ENCODE measurements at regions of chr7 and their contacts with region 1.

Region 1: DNA sequence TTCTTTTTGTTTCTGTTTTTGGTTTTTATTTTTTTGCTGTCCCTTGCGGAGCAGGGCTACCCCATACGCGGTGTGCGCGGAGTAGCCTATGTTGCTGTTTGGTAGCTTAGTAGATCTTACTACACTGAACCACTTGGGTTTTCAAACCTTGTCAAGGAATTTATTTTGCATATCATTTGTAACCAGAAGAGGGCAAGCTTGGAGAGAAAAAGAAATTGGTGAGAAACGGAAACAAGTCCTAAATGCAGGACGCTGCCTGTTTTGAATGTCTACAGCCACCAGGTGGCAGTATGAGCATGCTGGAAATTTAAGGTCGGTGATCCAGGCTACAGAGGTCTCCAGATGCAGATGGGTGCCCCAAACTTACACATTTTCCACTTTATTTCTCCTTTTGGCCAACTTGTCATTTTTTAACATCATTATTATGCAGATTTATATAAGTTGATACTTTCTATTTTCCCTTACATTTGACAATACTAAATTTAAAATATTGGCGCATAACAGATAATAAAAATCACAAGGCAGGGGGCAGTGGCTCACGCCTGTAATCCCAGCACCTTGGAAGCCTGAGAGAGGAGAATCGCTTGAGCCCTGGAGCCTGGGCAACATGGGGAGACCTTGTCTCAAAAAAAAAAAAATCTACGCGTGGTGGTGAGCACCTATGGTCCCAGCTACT is 15.3 kb upstream of the TRA2A start:
- DNase-seq: peak; percentile 85 to 89
- H3K4me3 ChIP-seq: no peak overlapping the region
- H3K27ac ChIP-seq: no peak overlapping the region
- H3K4me1 ChIP-seq: no peaks in the 10 kb centered on the region
- H3K27me3 ChIP-seq: no peaks in the 10 kb centered on the region
- CTCF ChIP-seq: peak; percentile 98

Region 2: DNA sequence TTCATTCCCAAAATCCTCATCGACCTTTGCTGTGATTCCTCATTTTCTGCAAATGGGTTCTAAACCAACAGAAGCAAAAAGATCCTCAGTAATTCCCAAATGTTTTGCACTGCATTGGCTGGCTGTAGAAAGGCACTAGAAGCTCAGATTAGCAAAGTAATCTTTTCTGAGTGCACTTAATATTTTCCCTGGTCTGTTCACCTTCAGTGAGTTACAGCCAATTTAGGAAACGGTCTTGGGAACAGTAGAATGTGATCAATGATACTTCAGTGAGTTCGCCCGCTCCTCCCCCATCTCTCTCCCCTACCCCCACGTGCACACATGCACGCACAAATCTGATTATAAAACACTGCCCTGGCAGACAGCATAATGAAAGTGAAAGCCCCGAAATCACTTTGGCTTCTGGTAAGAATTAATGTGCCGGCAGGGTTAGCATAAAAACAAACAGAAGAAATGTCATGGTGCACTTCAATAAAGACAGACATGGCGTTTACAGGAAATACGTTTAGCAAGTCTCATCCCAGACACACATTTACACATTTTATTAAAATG is 1400.0 kb before region 1 on chr7:
- CTCF ChIA-PET with region 1: interaction called, 11 read pairs
- POLR2A ChIA-PET with region 1: no interaction called
- intact Hi-C with region 1: no loop called
- DNase-seq: no peak
- H3K4me3 ChIP-seq: no peak overlapping the region
- H3K27ac ChIP-seq: no peak overlapping the region
- H3K4me1 ChIP-seq: 0 out of 2 replicates have a peak, but pooled peaks cover 3% of the 10 kb centered on the region
- H3K27me3 ChIP-seq: no peaks in the 10 kb centered on the region
- CTCF ChIP-seq: no peak

Region 3: DNA sequence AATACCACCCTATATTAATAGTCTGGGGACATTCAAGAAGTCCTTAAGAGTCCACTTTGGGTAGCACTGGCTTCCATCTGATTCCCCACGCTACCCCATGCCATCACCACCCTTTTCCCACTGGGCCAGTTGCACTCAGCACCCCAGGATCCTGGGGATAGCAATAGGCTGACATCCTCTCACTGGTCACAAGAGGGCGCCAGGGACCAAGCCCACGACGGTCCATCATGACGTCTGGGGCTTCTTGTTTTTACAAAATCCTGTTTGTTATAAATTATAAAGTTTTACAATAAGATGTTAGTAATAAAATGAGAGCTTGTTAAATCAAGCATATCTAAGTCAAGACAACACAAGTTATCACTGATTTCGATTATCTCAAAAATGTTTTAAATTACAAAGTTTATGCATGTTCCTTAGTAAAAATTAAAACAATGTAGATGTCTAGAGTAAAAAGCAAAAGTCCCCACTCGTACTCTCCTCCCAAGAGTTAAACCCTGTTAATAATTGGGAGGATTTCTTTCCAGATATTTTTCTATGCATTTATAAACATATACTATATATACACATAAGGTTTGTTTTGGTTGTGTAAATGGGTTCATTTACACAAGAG is 285.1 kb before region 1 on chr7:
- CTCF ChIA-PET with region 1: interaction called, 5 read pairs
- POLR2A ChIA-PET with region 1: no interaction called
- intact Hi-C with region 1: loop called (anchors 1 kb)
- DNase-seq: peak; percentile 61 to 62
- H3K4me3 ChIP-seq: no peak overlapping the region
- H3K27ac ChIP-seq: no peak overlapping the region
- H3K4me1 ChIP-seq: no peaks in the 10 kb centered on the region
- H3K27me3 ChIP-seq: no peaks in the 10 kb centered on the region
- CTCF ChIP-seq: peak; percentile 99

Region 4: DNA sequence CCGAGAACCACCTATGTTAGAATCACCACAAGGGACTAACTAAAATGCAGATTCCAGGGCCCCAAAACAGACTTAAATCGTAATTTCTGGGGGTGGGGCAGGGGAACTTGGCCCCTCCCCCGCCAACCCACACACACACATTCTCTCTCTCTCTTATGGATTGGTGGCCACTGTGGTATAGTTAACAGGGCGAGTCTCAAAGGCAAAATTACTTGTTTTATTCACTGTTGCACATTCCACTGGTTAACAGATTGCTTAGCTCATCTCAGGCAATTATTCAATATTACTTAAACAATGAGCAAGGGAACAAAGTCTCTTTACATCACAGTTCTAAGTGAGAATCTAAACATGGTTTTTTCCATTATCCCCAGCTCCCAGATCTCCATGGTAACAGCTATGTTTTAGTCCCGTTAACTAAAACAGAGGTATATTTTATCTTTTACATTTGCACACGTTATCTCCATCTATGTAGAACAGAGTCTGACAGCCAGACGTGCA is 115.3 kb before region 1 on chr7:
- CTCF ChIA-PET with region 1: interaction called, 10 read pairs
- POLR2A ChIA-PET with region 1: no interaction called
- intact Hi-C with region 1: loop called (anchors 1 kb)
- DNase-seq: no peak
- H3K4me3 ChIP-seq: no peak overlapping the region
- H3K27ac ChIP-seq: peak overlapping the region; percentile 71
- H3K4me1 ChIP-seq: peaks cover 29% of the 10 kb centered on the region
- H3K27me3 ChIP-seq: no peaks in the 10 kb centered on the region
- CTCF ChIP-seq: no peak

Region 5: DNA sequence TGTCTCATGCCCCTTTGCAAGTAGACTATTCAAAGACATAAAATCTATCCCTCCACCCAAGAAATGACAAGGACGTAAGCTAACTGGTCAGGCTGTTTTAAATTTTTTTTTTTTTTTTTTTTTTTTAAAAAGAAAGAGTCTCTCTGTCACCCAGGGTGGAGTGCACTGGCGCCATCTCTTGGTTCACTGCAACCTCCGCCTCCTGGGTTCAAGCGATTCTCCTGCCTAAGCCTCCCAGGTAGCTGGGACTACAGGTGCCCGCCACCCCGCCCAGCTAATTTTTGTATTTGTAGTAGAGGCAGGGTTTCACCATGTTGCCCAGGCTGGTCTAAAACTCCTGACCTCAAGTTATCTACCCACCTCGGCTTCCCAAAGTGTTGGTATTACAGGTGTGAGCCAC is 26.5 kb before region 1 on chr7:
- CTCF ChIA-PET with region 1: no interaction called
- POLR2A ChIA-PET with region 1: no interaction called
- intact Hi-C with region 1: no loop called
- DNase-seq: no peak
- H3K4me3 ChIP-seq: no peak overlapping the region
- H3K27ac ChIP-seq: no peak overlapping the region
- H3K4me1 ChIP-seq: no peaks in the 10 kb centered on the region; the same call in 1 of the 2 replicates
- H3K27me3 ChIP-seq: no peaks in the 10 kb centered on the region
- CTCF ChIP-seq: peak; percentile 51

Region 6: DNA sequence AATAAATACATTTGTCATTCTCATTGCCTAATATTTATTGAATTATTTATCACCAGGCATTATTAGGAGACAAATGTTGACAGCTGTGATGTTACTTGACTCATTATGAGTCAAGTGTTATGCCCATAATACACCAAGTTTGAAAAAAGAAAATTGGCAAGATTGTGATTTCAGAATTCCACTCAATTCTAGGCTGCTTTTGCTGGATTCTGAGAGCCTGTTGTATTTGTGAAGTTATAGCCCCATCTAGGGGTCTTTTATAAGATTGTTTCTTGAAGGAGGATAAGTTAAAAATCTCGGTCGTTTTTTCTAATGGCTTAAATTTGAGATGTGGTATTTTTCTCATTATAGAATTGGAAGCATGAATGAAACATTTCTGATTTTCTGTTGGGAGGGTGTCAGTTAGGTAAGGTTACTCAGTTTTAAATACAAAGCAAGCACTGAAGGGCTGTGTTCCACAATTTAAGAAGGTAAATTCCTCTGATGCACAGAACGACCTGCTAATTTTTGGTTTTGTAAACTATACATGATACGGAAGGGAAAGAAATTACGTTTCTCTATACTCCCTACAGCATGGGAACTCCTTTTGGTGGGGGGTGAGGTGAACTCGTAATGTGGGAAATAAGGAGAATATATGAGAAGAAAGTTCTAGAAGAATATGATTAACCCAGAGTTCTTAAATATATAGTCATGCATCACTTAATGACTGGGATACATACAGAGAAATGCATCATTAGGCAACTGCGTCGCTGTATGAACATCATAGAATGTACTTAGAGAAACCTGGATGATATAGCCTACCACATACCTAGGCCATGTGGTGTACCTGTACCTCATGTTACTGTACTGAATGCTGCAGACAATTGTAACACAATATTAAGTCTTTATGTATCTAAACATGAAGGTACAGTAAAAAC is 165.6 kb after region 1 on chr7:
- CTCF ChIA-PET with region 1: interaction called, 5 read pairs
- POLR2A ChIA-PET with region 1: no interaction called
- intact Hi-C with region 1: loop called (anchors 1 kb)
- DNase-seq: peak in 1 of 2 experiments; percentile 71
- H3K4me3 ChIP-seq: no peak overlapping the region
- H3K27ac ChIP-seq: no peak overlapping the region
- H3K4me1 ChIP-seq: peaks cover 22% of the 10 kb centered on the region
- H3K27me3 ChIP-seq: no peaks in the 10 kb centered on the region
- CTCF ChIP-seq: peak; percentile 95

Region 7: GRCh38 chr7:24665564-24666294 is 1118.7 kb after region 1 on chr7:
- CTCF ChIA-PET with region 1: no interaction called
- POLR2A ChIA-PET with region 1: no interaction called
- intact Hi-C with region 1: loop called (anchors 1 kb)
- DNase-seq: peak; percentile 39 to 48
- H3K4me3 ChIP-seq: no peak overlapping the region
- H3K27ac ChIP-seq: no peak overlapping the region
- H3K4me1 ChIP-seq: peaks cover 21% of the 10 kb centered on the region
- H3K27me3 ChIP-seq: no peaks in the 10 kb centered on the region
- CTCF ChIP-seq: peak; percentile 97

Region 8: GRCh38 chr7:25158966-25159365 is 1611.9 kb after region 1 on chr7:
- CTCF ChIA-PET with region 1: no interaction called
- POLR2A ChIA-PET with region 1: no interaction called
- intact Hi-C with region 1: loop called (anchors 2 kb)
- DNase-seq: no peak
- H3K4me3 ChIP-seq: no peak overlapping the region
- H3K27ac ChIP-seq: no peak overlapping the region
- H3K4me1 ChIP-seq: no peaks in the 10 kb centered on the region
- H3K27me3 ChIP-seq: peaks cover 36% of the 10 kb centered on the region
- CTCF ChIP-seq: no peak